ENCODE measurements at regions of chr12 and their contacts with region 1.

Region 1: GRCh38 chr12:31959161-31959700 is at the start of gene RESF1:
- DNase-seq: peak; percentile 98
- H3K4me3 ChIP-seq: peak within 1 kb of the TSS; percentile 64 to 81 (median 72)
- H3K27ac ChIP-seq: peak within 1 kb of the TSS; percentile 94 to 99 (median 98)
- H3K4me1 ChIP-seq: peaks cover 30 to 86% (median 54%) of the 10 kb centered on the region in 6 donors
- H3K27me3 ChIP-seq: no peaks in the 10 kb centered on the region
- CTCF ChIP-seq: peak in 4 of 11 experiments; percentile 15 to 37 (median 25)
- POLR2A ChIP-seq: peak; percentile 46 to 94 (median 76)
- total RNA-seq, gene RESF1: 173 to 298 (median 190) TPM

Region 2: DNA sequence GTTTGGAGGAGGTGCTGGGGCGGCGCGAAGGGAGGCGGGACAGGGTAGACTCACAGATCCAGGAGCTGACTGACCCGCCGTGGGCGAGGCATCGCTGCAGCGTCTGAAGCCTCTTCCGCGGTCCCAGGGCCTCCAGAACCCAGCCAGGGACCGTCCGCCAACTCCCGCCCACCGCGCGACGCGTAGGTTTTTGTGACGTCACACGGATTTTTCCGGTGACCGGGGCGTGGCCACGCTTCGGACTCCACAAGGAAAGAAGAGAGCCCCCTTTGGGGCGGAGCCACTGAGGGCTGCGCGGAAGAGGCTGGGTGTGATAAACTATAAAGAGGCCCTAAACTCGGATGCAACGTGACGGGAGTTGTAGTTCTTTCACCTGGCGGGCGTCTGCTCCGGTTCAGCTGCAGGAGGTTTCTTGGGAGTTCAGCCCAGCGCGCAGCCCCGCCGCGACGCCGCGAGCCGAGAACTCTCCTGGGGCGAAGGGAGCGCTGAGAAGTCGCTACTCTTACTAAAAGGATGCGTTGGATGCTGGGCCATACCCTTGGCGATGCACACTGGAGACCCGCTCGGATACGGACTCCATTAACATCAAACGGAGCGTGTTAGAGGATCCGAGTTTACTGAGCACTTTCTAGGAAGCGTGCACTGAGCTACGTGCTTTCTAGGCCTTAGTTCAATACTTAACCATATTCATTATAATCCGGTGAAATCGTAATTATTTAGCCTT is 230.2 kb before region 1 on chr12 and contains the start of gene AMN1:
- intact Hi-C with region 1: loop called (anchors 10 kb)
- DNase-seq: peak; percentile 100
- H3K4me3 ChIP-seq: peak within 1 kb of the TSS; percentile 39 to 70 (median 50)
- H3K27ac ChIP-seq: peak within 1 kb of the TSS; percentile 92 to 99 (median 98)
- H3K4me1 ChIP-seq: peaks cover 24 to 93% (median 54%) of the 10 kb centered on the region in 6 donors
- H3K27me3 ChIP-seq: no peaks in the 10 kb centered on the region
- CTCF ChIP-seq: peak in 8 of 11 experiments; percentile 13 to 62 (median 38)
- POLR2A ChIP-seq: peak in 1 of 3 donors; percentile 83
- total RNA-seq, gene AMN1: 12.9 to 27.4 (median 15.8) TPM

Measured in spleen (tissue), 13 donors.